ENCODE measurements at regions of chr3 and their contacts with region 1.

Region 1: DNA sequence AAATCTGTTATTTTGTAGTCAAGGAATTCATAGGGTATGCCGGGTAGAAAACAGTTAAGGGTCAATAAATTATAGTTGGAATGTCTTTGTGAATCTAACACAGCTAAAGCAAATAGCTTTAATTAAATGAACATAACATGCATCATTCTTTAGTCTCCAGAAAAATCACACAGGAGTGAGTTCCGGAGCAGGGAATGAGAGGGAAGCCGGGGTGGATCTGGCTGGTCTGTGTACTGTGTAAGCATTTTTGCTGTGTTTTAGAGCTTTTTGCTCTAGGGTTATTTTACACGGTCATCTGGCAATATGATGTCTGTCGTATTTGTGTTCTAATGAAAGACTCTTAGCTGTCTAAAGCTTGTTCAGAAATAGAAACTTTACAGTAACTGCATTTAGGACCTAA is 57.5 kb downstream of the MED12L start:
- DNase-seq: no peak
- CTCF ChIP-seq: no peak

Region 2: GRCh38 chr3:151093905-151094304 is 49.0 kb before region 1 on chr3:
- CTCF ChIA-PET with region 1: no interaction called
- POLR2A ChIA-PET with region 1: no interaction called
- DNase-seq: peak; percentile 15
- CTCF ChIP-seq: no peak

Region 3: GRCh38 chr3:151156618-151157216 is 13.8 kb after region 1 on chr3:
- CTCF ChIA-PET with region 1: interaction called, 12 read pairs
- POLR2A ChIA-PET with region 1: no interaction called
- DNase-seq: peak; percentile 60
- CTCF ChIP-seq: peak; percentile 66

Region 4: DNA sequence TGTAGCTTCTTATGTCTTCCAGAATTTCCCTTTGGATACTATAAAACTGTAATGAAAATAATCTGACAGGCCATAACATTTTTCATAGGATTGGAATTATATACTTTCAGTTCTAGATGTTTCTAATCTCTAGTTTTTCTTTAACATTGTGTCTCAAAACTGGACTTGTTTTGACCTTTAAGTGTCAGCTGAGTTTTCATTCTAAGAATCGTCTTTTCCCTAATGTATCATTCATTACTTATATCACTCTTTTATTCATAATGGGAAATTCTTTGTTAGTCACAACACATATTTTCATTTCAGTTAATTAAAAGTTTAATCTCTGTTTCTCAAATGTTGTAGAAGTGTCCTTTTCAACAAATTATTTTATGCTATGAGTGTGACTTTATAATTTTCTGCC is 48.2 kb after region 1 on chr3:
- CTCF ChIA-PET with region 1: no interaction called
- POLR2A ChIA-PET with region 1: no interaction called
- DNase-seq: no peak
- CTCF ChIP-seq: no peak